Right ventricle myocardium superior (tissue), 1 donor: ENCODE measurements at regions of chr7 and their contacts with region 1.

Region 1: GRCh38 chr7:152956006-152956405 is 196.5 kb downstream of the ACTR3B start:
- DNase-seq: no peak
- ATAC-seq: no peak

Region 2: DNA sequence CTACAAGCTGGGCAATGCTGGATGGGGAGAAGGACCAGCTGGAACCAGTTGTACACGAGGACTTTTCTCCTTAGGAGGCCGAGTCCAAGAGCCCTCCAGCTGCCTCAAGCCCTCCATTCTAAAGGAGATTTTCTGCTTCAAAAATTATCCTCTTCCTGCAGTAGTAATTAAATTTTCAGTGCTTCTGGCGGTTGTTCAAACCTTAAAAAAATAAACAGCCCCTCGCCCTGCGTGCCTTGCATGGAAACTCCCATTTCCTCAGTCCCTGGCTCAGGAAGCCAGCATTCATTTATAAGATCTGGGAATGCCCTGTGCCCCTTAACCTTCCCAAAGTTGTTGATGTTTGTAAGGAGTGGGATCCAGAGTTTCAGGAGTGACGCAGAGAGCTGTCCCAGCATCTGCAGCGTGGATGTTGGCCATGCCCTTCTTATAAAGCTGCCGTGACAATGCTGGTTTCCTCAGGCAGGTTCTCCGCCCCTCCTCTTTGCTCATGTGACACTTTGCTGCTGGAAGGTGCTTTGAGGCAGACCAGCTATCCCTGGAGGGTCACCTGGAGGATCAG is 220.5 kb before region 1 on chr7:
- intact Hi-C with region 1: no loop called
- DNase-seq: no peak
- ATAC-seq: no peak

Region 3: DNA sequence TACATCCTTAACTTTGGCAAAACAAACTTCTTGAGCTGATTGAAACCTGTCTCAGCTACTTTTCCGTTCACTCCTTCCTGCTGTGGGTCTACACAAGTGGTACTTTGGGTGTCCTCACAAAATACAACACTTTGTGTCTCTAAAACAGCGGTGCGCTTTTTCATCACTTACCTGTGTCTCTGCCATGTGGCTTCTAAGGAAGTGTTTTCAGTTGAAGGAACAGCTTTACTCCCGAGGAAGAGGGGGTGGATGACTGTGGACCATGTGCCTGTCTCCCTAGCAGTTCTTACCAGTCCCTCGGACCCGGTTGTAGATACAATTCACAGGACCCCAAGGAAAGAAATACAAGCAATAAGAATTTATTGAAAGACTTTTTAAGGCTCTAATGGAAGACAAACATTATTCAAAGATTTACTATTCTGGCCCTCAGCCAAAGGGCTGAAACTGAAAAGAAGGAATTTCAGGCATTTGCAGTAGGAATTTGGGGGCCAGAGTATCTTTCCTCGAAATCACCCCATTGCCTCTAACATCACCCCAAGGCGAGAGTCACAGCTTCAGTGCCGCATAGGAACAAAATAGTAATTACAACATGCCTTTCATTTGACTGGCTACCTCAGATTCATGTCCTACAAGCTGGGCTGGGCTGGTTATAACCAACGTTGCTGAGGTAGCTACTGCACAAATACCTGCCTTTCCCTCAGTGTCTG is 49.9 kb after region 1 on chr7:
- intact Hi-C with region 1: loop called (anchors 2 kb)
- DNase-seq: no peak
- ATAC-seq: no peak